Activated T-helper 1 cell treated with anti-CD3 and anti-CD28 coated beads, Interleukin-12 subunit alpha, Interleukin-12 subunit beta, Interleukin-2, Interleukin-4 antibody, amounts not matched to agents 30 ng/mL and 10 ng/mL and 1 ng/mL, durations not matched to agents 14 hours and 24 hours and 36 hours (primary cell): ENCODE measurements at regions of chr3 and their contacts with region 1.

Region 1: DNA sequence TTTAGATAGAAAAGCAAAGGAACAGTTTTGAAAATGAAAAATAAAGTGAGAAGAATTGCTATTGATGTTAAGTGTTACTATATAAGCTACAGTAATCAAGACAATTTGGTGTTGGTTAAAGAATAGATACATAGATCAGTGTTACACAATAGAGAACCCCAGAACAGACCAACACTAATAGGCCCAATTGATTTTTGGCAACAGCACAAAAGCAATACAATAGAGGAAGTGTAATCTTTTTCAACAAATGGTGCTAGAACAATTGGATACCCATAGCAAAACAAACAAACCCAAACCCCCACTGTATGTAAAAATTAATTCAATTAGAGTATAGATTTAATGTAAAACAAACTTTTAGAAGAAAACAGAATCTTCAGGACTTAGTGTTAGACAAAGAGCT is 61.8 kb downstream of the ATP11B start:
- DNase-seq: no peak
- H3K4me3 Mint-ChIP-seq: no peak overlapping the region
- H3K27ac Mint-ChIP-seq: no peak overlapping the region
- H3K4me1 Mint-ChIP-seq: no peaks in the 10 kb centered on the region
- H3K27me3 Mint-ChIP-seq: no peaks in the 10 kb centered on the region

Region 2: GRCh38 chr3:182626484-182627467 is 228.3 kb before region 1 on chr3:
- intact Hi-C with region 1: no loop called
- DNase-seq: no peak
- H3K4me3 Mint-ChIP-seq: no peak overlapping the region
- H3K27ac Mint-ChIP-seq: no peak overlapping the region
- H3K4me1 Mint-ChIP-seq: no peaks in the 10 kb centered on the region
- H3K27me3 Mint-ChIP-seq: peaks cover 9% of the 10 kb centered on the region

Region 3: DNA sequence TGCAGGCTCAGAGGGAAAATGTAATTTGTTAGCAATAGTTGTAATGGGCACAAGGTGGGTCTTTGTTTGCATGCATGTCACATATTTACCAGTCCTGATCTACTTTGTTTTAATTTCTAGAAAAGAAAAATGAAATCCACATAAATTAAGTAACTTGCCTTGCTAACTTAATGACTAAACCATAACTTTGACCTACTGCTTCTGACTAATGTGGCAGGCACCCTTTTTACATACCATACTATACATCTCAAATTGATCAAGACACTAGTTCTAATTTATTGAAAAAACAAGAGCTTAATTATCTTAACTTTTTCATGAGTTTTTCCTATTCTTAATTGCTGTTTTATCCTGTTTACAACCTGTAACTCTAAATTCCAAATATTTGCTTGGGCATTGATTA is 31.4 kb after region 1 on chr3:
- intact Hi-C with region 1: loop called (anchors 1 kb)
- DNase-seq: no peak
- H3K4me3 Mint-ChIP-seq: no peak overlapping the region
- H3K27ac Mint-ChIP-seq: no peak overlapping the region
- H3K4me1 Mint-ChIP-seq: no peaks in the 10 kb centered on the region
- H3K27me3 Mint-ChIP-seq: no peaks in the 10 kb centered on the region